ENCODE measurements at regions of chr21 and their contacts with region 1.

Region 1: DNA sequence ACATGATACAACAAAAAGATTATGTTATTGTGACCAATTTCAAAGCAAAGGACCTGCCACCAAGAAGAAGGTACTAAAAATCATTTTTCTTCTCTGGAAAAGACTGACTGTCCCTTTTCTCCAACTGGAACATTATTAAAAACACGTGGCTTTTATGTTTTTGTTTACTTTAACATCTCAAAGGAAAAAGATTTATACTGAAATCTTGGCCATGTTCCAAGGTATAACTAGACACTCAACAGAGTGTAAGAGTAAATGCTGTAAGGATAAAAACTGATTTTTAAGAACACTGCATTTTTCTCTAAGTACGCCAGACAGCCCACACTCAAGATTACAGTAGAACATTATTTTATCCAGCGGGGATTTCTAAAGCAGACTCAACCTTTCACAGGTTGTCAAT is 62.1 kb downstream of the BRWD1 start:
- DNase-seq: peak; percentile 24
- ATAC-seq: no peak
- H3K4me3 ChIP-seq: no peak overlapping the region
- H3K27ac ChIP-seq: no peak overlapping the region
- H3K4me1 ChIP-seq: no peaks in the 10 kb centered on the region
- H3K27me3 ChIP-seq: no peaks in the 10 kb centered on the region
- CTCF ChIP-seq: no peak
- POLR2A ChIP-seq: no peak
- RAD21 ChIP-seq: no peak

Region 2: GRCh38 chr21:39189857-39190604 is 61.3 kb before region 1 on chr21:
- CTCF ChIA-PET with region 1: no interaction called
- POLR2A ChIA-PET with region 1: no interaction called
- dilution Hi-C with region 1: no loop called
- in situ Hi-C with region 1: no loop called
- intact Hi-C with region 1: loop called (anchors 10 kb)
- DNase-seq: peak; percentile 64
- ATAC-seq: peak; percentile 79
- H3K4me3 ChIP-seq: no peak overlapping the region
- H3K27ac ChIP-seq: no peak overlapping the region
- H3K4me1 ChIP-seq: peaks cover 4% of the 10 kb centered on the region; the same call in 1 of the 2 replicates
- H3K27me3 ChIP-seq: no peaks in the 10 kb centered on the region
- CTCF ChIP-seq: no peak
- POLR2A ChIP-seq: no peak
- RAD21 ChIP-seq: no peak

Region 3: DNA sequence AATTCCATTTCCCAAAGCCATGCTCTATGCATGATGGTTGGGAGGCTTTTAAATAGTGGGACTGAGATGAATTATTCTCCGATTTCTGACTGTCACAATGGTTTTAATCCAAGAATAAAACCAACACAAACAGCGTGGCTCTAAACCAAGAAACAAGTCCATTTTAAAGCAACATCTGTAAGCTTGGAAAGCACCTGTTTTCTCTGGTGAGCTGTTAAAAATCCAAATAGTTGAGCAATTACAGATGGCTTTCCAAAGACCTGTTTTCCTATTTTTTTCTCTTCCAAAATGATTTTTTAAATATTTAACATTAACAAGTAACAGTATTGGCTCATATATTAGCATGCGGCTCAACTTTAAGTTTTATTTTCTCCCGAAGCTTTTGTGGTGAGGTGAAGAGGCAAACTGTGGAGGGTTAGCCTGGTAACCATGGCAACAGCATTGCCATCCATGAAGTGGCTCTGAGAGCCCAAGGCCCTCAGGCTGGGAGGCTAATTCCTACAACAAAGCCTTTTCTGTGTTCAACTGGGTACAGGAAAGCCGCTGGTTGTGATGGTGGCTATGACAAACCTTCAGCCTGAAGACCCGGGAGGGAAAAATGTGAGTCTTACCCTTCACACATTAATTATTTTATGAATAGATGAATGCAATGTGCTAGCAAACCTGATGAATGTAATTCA is 304.7 kb after region 1 on chr21:
- CTCF ChIA-PET with region 1: no interaction called
- POLR2A ChIA-PET with region 1: no interaction called
- dilution Hi-C with region 1: no loop called
- in situ Hi-C with region 1: no loop called
- intact Hi-C with region 1: no loop called
- DNase-seq: no peak
- ATAC-seq: no peak
- H3K4me3 ChIP-seq: no peak overlapping the region
- H3K27ac ChIP-seq: no peak overlapping the region
- H3K4me1 ChIP-seq: no peaks in the 10 kb centered on the region
- H3K27me3 ChIP-seq: no peaks in the 10 kb centered on the region
- CTCF ChIP-seq: no peak
- POLR2A ChIP-seq: no peak
- RAD21 ChIP-seq: no peak